ENCODE measurements at regions of chr7 and their contacts with region 1.

Region 1: DNA sequence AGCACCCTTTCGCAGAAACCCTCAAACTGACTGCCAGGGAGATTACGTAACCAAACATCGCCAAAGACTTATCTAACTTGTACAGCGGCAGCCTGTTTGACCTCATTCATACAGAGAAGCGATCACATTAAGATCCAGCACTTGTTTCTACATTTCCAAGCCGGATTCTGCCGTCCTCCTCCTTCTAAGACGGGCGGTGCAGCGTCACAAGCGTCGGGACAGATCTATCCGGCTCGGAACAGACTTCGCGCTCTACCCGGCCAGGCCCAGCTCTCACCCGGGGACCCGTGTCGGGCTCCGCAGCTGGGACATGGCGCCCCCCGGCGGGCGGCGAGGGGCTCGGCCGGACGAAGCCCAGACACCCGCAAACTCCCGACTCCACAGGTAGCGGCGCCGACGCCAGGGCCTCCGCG is 373 bp downstream of the H2AZ2 start:
- DNase-seq: peak; percentile 51
- ATAC-seq: peak; percentile 75
- H3K4me3 ChIP-seq: peak overlapping the region; percentile 75
- H3K27ac ChIP-seq: peak overlapping the region; percentile 87
- H3K4me1 ChIP-seq: peaks cover 8% of the 10 kb centered on the region; the same call in 1 of the 2 replicates
- H3K27me3 ChIP-seq: no peaks in the 10 kb centered on the region
- CTCF ChIP-seq: peak; percentile 82 to 95 (median 88)
- EP300 ChIP-seq: no peak
- POLR2A ChIP-seq: no peak
- RAD21 ChIP-seq: peak; percentile 79

Region 2: DNA sequence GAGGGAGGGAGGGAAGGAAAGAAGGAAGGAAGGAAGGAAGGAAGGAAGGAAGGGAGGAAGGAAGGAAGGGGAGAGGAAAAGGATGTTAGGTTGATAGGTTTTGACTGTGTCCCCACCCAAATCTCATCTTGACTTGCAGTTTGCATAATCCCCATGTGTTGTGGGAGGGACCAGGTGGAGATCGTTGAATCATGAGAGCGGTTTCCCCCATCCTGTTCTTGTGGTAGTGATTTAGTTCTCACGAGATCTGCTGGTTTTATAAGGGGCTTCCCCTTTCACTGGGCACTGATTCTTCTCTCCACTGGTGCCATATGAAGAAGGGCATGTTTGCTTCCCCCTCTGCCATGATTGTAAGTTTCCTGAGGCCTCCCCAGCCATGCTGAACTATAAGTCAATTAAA is 341.9 kb before region 1 on chr7:
- CTCF ChIA-PET with region 1: no interaction called
- POLR2A ChIA-PET with region 1: no interaction called
- RAD21 ChIA-PET with region 1: no interaction called
- SMC1A ChIA-PET with region 1: no interaction called
- in situ Hi-C with region 1: no loop called
- intact Hi-C with region 1: no loop called
- DNase-seq: no peak
- ATAC-seq: no peak
- H3K4me3 ChIP-seq: no peak overlapping the region
- H3K27ac ChIP-seq: no peak overlapping the region
- H3K4me1 ChIP-seq: no peaks in the 10 kb centered on the region
- H3K27me3 ChIP-seq: 0 out of 4 replicates have a peak, but pooled peaks cover 0 to 2% of the 10 kb centered on the region in 2 experiments
- CTCF ChIP-seq: no peak
- EP300 ChIP-seq: no peak
- POLR2A ChIP-seq: no peak
- RAD21 ChIP-seq: no peak

Region 3: DNA sequence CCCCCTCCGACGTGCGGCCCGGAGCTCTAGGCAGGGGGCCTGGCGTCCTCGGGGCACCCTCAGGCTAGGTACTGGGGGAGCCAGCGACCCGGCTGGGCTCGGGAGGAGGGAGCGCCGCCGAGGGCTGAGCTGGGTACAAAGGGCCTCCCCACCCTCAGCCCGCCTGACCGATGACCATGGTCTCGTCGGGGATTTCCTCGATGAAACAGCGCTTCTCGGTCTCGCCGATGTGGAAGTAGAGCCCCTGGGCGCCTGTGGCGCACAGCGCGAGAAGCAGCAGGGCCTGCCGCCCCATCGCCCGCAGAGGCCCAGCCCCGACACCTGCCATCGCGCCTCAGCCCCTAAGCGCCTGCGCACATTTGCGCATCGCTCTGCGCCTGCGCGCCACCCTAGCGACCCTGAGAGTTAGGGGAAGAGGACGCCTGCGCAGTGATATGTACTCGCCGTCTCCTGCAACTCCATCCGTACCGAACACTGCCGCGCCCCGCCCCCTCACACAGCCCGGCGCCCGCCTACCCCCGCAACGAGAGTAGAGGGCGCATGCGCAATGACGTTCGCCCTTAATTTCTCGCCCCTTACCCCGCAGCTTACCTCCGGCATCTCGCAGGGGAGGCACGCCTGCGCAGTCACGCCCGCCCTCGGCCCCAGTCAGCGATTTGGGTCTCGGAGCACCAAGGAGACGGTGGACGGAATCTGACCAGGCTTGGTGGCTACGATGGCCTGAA is 265.5 kb before region 1 on chr7 and contains the start of gene TMED4:
- CTCF ChIA-PET with region 1: interaction called, 25 read pairs
- POLR2A ChIA-PET with region 1: interaction called, 20 read pairs
- RAD21 ChIA-PET with region 1: interaction called, 26 read pairs
- SMC1A ChIA-PET with region 1: interaction called, 10 read pairs
- in situ Hi-C with region 1: loop called (anchors 5 kb)
- intact Hi-C with region 1: loop called (anchors 1 kb)
- DNase-seq: peak; percentile 97
- ATAC-seq: peak; percentile 92
- H3K4me3 ChIP-seq: peak within 1 kb of the TSS; percentile 83
- H3K27ac ChIP-seq: peak within 1 kb of the TSS; percentile 86
- H3K4me1 ChIP-seq: peaks cover 4% of the 10 kb centered on the region; the same call in 1 of the 2 replicates
- H3K27me3 ChIP-seq: no peaks in the 10 kb centered on the region
- CTCF ChIP-seq: no peak
- EP300 ChIP-seq: no peak
- POLR2A ChIP-seq: peak; percentile 98
- RAD21 ChIP-seq: no peak
- polyA plus RNA-seq, gene TMED4: 20.8 to 21.0 TPM

Region 4: GRCh38 chr7:44606450-44607254 is 240.9 kb before region 1 on chr7 and contains the start of gene OGDH:
- CTCF ChIA-PET with region 1: interaction called, 7 read pairs
- POLR2A ChIA-PET with region 1: interaction called, 11 read pairs
- RAD21 ChIA-PET with region 1: interaction called, 13 read pairs
- SMC1A ChIA-PET with region 1: interaction called, 9 read pairs
- in situ Hi-C with region 1: no loop called
- intact Hi-C with region 1: no loop called
- DNase-seq: peak; percentile 87
- ATAC-seq: peak; percentile 98
- H3K4me3 ChIP-seq: peak within 1 kb of the TSS; percentile 91
- H3K27ac ChIP-seq: peak within 1 kb of the TSS; percentile 93
- H3K4me1 ChIP-seq: peaks cover 19% of the 10 kb centered on the region
- H3K27me3 ChIP-seq: no peaks in the 10 kb centered on the region
- CTCF ChIP-seq: no peak
- EP300 ChIP-seq: peak in 1 of 2 experiments; percentile 12; a peak in 1 of 4 replicates
- POLR2A ChIP-seq: peak; percentile 95
- RAD21 ChIP-seq: no peak
- polyA plus RNA-seq, gene OGDH: 4.1 to 4.2 TPM

Region 5: DNA sequence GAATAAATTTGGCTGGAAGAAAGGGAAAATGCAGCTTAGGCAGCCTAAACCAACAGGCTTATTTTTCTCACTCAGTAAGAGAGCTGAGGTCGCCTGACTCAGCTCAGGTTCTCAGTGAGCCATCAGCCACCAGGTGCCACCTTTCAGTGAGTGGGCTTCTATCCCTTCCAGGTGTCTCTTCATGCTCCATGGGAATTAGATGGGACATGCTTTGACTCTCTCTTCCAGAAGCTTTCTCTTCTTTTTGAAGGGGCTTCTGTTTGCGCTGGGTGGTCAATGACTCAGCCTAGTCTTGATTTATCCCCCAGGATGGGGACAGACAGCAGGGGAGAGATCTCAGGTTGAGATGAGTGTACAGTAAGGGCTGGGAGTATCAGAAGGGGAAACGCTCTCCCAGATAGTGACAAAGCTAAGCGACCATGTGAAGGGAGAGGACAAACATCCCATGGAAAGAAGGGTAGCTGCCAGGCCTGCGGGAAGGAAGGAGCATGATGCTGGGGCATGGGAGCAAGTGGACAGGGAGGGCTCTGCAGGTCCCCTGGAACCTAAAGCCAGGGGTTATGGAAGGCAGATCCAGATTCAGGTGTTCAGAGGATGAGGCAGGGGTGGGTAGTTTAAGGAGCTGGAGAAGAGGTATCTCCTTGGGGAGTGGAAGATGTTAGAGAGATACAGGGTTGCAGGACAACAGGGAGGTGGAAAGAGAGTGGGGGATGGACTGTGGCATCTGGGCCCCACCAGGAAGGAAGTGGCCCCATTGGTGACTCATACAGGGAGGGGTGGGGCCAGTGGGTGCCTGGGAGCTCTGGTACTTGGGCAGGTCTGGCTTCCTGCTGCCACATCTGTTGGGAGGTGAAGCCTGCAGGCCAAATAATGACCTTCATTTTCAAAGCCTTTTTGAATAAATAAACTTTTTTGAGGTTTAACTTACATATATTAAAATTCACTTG is 208.6 kb before region 1 on chr7:
- CTCF ChIA-PET with region 1: interaction called, 4 read pairs
- POLR2A ChIA-PET with region 1: interaction called, 5 read pairs
- RAD21 ChIA-PET with region 1: interaction called, 12 read pairs
- SMC1A ChIA-PET with region 1: interaction called, 5 read pairs
- in situ Hi-C with region 1: no loop called
- intact Hi-C with region 1: loop called (anchors 1 kb)
- DNase-seq: peak; percentile 80
- ATAC-seq: peak; percentile 88
- H3K4me3 ChIP-seq: peak overlapping the region; percentile 38; the same call in 1 of the 2 replicates
- H3K27ac ChIP-seq: peak overlapping the region; percentile 98
- H3K4me1 ChIP-seq: peaks cover 58% of the 10 kb centered on the region
- H3K27me3 ChIP-seq: no peaks in the 10 kb centered on the region
- CTCF ChIP-seq: peak; percentile 1 to 17 (median 8); a peak in 1 of 6 replicates
- EP300 ChIP-seq: peak; percentile 87 to 91
- POLR2A ChIP-seq: peak; percentile 45
- RAD21 ChIP-seq: peak; percentile 46

Region 6: GRCh38 chr7:44797329-44798251 is 49.9 kb before region 1 on chr7:
- CTCF ChIA-PET with region 1: interaction called, 19 read pairs
- POLR2A ChIA-PET with region 1: interaction called, 36 read pairs
- RAD21 ChIA-PET with region 1: interaction called, 20 read pairs
- SMC1A ChIA-PET with region 1: interaction called, 8 read pairs
- in situ Hi-C with region 1: no loop called
- intact Hi-C with region 1: loop called (anchors 1 kb)
- DNase-seq: no peak
- ATAC-seq: peak; percentile 77
- H3K4me3 ChIP-seq: peak overlapping the region; percentile 96
- H3K27ac ChIP-seq: peak overlapping the region; percentile 99
- H3K4me1 ChIP-seq: peaks cover 3% of the 10 kb centered on the region
- H3K27me3 ChIP-seq: no peaks in the 10 kb centered on the region
- CTCF ChIP-seq: peak; percentile 57 to 61 (median 61)
- EP300 ChIP-seq: no peak
- POLR2A ChIP-seq: no peak
- RAD21 ChIP-seq: peak; percentile 24; the same call in 1 of the 2 replicates

Region 7: DNA sequence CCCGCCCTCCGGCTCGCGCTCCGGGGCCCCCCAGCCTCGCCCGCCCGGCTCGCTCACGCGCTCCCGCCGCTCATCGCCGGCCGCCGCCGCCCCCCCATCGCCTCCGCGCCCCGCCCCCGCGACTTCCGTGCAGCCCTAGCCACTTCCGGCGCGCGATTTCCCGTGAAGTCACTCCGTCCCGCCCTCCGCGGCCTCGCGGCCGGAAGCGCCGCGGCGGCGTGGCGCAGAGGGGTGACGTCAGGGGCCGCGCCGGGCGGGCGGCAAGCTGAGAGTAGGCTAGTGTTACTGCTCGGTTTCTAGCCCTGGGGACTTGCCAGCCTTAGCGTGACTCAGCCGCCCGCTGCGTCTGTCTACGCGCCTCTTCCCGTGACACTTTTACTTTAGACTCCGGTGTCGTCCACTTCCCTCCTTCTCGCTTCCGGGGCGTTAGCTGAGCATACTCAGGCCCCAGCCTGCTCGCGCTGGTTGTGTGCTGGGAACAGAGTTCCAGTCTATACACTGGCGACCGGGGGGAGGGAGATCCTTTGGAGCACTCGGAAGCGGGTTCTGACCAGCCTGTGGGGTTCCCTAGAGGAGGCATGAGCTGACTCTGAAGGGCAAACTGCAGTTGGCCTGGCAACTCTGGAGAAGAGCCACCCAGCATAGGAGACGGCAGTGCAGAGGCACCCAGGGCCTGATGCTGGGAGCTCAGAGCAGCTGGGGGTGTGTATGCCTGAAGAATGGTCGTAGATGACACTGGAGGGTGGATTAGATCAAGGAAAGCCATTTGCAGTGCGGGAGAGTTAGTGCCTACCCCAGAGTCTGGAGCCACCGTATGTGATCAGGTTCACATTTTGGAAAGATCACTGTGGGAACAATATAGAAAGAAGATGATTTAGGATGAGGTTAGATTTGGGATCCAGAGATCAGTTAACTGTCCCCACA is 38.1 kb after region 1 on chr7 and contains the start of gene PURB:
- CTCF ChIA-PET with region 1: interaction called, 9 read pairs
- POLR2A ChIA-PET with region 1: interaction called, 18 read pairs
- RAD21 ChIA-PET with region 1: interaction called, 11 read pairs
- SMC1A ChIA-PET with region 1: interaction called, 46 read pairs
- in situ Hi-C with region 1: no loop called
- intact Hi-C with region 1: loop called (anchors 2 kb)
- DNase-seq: peak; percentile 79
- ATAC-seq: peak; percentile 88
- H3K4me3 ChIP-seq: peak within 1 kb of the TSS; percentile 99
- H3K27ac ChIP-seq: peak within 1 kb of the TSS; percentile 99
- H3K4me1 ChIP-seq: 0 out of 2 replicates have a peak, but pooled peaks cover 3% of the 10 kb centered on the region
- H3K27me3 ChIP-seq: no peaks in the 10 kb centered on the region
- CTCF ChIP-seq: no peak; a peak in 1 of 6 replicates
- EP300 ChIP-seq: peak; percentile 62 to 64; a peak in 3 of 4 replicates
- POLR2A ChIP-seq: peak; percentile 91
- RAD21 ChIP-seq: no peak
- polyA plus RNA-seq, gene PURB: 2.5 to 2.8 TPM

Region 8: DNA sequence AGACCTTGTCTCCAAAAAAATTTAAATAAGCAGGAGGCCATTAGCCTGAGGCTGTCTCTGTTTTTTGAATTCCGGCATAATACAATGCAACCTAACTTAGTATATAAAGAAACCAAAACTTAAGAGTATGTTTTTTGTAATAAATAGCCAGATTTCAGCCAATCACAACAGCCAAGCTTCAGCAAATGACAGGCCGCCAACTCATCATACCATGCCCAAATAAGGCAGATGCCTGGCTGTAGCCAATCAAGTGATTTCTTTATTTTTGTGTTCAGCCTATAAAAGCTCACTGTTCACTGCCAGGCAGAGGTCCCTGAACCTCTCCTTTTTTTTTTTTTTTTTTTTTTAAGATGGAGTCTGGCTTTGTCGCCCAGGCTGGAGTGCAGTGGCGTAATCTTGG is 50.5 kb after region 1 on chr7:
- CTCF ChIA-PET with region 1: no interaction called
- POLR2A ChIA-PET with region 1: no interaction called
- RAD21 ChIA-PET with region 1: no interaction called
- SMC1A ChIA-PET with region 1: no interaction called
- in situ Hi-C with region 1: no loop called
- intact Hi-C with region 1: no loop called
- DNase-seq: no peak
- ATAC-seq: peak; percentile 42; the same call in 2 of the 3 replicates
- H3K4me3 ChIP-seq: no peak overlapping the region
- H3K27ac ChIP-seq: no peak overlapping the region
- H3K4me1 ChIP-seq: no peaks in the 10 kb centered on the region
- H3K27me3 ChIP-seq: no peaks in the 10 kb centered on the region
- CTCF ChIP-seq: no peak
- EP300 ChIP-seq: no peak
- POLR2A ChIP-seq: no peak
- RAD21 ChIP-seq: no peak

Region 9: DNA sequence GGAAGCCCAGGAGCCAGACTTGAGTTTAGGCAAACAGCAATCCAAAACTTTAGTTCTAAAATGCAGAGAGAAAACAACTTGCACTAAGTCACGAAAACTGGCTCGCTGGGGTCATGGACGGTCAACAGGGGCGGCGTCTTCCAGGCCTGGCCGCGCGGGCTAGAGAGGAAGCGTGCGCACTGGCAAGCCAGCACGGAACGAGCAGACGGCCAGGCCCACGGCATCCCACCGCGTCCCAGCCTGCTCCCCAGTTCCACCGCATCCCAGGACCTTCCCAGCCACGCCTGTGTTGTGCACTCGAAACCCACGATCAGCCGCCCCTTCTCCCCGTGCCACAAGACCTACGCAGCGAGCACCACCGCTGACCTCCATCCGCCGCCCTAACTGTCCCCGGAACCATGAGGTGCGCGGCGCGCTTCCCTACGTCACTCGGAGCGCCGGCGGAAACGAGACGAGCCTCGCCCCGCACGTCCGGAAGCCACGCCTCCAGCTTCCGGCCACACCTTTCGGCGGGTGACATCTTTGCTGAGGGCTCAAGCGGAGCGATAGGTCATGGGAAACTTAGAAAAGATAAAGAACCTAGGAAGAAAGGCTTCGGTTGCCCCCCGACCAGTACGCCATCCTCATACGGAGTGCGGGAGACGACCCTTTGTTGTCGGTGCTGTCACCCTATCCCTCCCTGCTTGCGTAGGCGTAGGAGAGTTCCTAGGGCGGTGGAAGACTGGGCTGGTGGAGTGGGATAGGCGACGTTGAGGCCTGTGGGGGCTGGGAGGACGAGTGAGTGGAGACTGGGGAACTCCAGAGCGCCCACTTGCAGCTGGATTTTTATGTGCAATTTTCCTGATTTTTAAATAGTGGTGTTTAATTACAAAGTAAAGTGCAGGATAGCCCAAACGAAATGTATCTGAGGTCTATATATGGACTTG is 264.0 kb after region 1 on chr7 and contains the start of gene TBRG4:
- CTCF ChIA-PET with region 1: no interaction called
- POLR2A ChIA-PET with region 1: interaction called, 6 read pairs
- RAD21 ChIA-PET with region 1: interaction called, 3 read pairs
- SMC1A ChIA-PET with region 1: interaction called, 3 read pairs
- in situ Hi-C with region 1: no loop called
- intact Hi-C with region 1: loop called (anchors 5 kb)
- DNase-seq: peak; percentile 85
- ATAC-seq: peak; percentile 94
- H3K4me3 ChIP-seq: peak within 1 kb of the TSS; percentile 90
- H3K27ac ChIP-seq: peak within 1 kb of the TSS; percentile 83
- H3K4me1 ChIP-seq: peaks cover 7% of the 10 kb centered on the region
- H3K27me3 ChIP-seq: no peaks in the 10 kb centered on the region
- CTCF ChIP-seq: peak; percentile 11 to 22 (median 16); a peak in 4 of 6 replicates
- EP300 ChIP-seq: peak; percentile 12 to 57; a peak in 2 of 4 replicates
- POLR2A ChIP-seq: peak; percentile 100
- RAD21 ChIP-seq: no peak
- polyA plus RNA-seq, gene TBRG4: 8.4 to 13.3 TPM

Region 10: DNA sequence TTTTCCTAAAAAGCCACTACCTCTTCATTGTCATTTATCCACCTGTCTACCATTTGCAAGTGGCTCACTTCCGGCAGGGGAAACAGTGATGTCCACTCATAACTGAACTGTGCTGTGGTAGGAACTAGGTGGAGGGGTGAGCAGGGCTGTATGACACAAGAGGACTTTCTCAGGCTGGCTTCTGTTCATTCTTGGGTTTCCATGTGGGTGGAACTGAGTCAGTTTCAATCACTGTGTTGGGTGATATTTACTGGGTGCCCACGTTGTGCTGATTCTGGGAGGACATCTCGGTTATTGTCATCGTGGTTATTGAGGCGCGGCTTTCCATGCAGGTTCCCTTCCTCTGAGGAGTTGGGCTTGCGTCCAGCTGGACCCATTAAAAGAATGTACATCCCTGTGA is 348.9 kb after region 1 on chr7:
- CTCF ChIA-PET with region 1: no interaction called
- POLR2A ChIA-PET with region 1: no interaction called
- RAD21 ChIA-PET with region 1: no interaction called
- SMC1A ChIA-PET with region 1: no interaction called
- in situ Hi-C with region 1: no loop called
- intact Hi-C with region 1: no loop called
- DNase-seq: peak; percentile 9
- ATAC-seq: peak; percentile 89
- H3K4me3 ChIP-seq: no peak overlapping the region
- H3K27ac ChIP-seq: no peak overlapping the region
- H3K4me1 ChIP-seq: peaks cover 5% of the 10 kb centered on the region
- H3K27me3 ChIP-seq: no peaks in the 10 kb centered on the region
- CTCF ChIP-seq: no peak
- EP300 ChIP-seq: no peak
- POLR2A ChIP-seq: no peak
- RAD21 ChIP-seq: no peak

Region 11: GRCh38 chr7:45258533-45259226 is 411.2 kb after region 1 on chr7:
- CTCF ChIA-PET with region 1: no interaction called
- POLR2A ChIA-PET with region 1: no interaction called
- RAD21 ChIA-PET with region 1: no interaction called
- SMC1A ChIA-PET with region 1: no interaction called
- in situ Hi-C with region 1: no loop called
- intact Hi-C with region 1: no loop called
- DNase-seq: no peak
- ATAC-seq: no peak
- H3K4me3 ChIP-seq: no peak overlapping the region
- H3K27ac ChIP-seq: no peak overlapping the region
- H3K4me1 ChIP-seq: peaks cover 7% of the 10 kb centered on the region
- H3K27me3 ChIP-seq: no peaks in the 10 kb centered on the region; a peak in 1 of 4 replicates
- CTCF ChIP-seq: no peak
- EP300 ChIP-seq: no peak
- POLR2A ChIP-seq: no peak
- RAD21 ChIP-seq: no peak